Activated T-helper 1 cell treated with anti-CD3 and anti-CD28 coated beads, Interleukin-12 subunit alpha, Interleukin-12 subunit beta, Interleukin-2, Interleukin-4 antibody, amounts not matched to agents 30 ng/mL and 10 ng/mL and 1 ng/mL, durations not matched to agents 14 hours and 24 hours and 36 hours (primary cell): ENCODE measurements at regions of chr1 and their contacts with region 1.

Region 1: DNA sequence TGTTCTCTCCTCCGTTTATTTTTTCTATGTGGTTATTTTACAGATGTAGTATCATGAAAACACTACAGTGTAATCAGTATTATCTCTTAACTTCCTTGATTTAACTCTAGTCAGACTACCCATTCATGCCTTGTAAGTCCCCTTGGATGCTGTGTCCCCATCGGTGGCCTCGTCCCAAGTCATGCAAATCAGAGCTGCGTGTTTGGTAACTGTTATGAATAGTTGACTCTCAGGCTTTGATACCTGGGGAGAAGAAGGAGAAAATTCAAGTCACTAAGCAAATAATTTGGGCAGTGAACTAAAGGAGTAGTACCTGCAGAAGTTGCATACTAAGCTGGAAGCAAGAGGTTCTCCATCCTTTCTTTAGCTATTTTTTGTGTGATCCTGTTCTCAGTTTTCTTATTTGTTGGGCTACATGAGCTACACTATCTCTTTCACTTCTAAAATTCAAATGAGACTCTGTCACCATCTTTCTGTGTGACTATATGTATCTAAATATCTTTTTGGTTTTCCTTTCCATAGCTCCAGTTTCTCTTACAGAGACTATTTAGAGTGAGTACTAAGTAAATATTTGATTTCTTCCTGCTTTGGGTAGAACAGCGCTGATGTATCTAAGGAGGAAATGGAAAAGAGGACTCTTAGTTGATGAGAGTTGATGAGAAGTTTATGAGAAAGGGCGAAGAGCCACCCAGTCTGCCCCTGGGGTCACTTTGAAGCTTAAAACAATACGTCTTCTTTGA is 50.9 kb downstream of the VANGL2 start:
- DNase-seq: no peak
- H3K4me3 Mint-ChIP-seq: peak overlapping the region; percentile 49
- H3K27ac Mint-ChIP-seq: peak overlapping the region; percentile 93
- H3K4me1 Mint-ChIP-seq: peaks cover 71% of the 10 kb centered on the region
- H3K27me3 Mint-ChIP-seq: no peaks in the 10 kb centered on the region

Region 2: DNA sequence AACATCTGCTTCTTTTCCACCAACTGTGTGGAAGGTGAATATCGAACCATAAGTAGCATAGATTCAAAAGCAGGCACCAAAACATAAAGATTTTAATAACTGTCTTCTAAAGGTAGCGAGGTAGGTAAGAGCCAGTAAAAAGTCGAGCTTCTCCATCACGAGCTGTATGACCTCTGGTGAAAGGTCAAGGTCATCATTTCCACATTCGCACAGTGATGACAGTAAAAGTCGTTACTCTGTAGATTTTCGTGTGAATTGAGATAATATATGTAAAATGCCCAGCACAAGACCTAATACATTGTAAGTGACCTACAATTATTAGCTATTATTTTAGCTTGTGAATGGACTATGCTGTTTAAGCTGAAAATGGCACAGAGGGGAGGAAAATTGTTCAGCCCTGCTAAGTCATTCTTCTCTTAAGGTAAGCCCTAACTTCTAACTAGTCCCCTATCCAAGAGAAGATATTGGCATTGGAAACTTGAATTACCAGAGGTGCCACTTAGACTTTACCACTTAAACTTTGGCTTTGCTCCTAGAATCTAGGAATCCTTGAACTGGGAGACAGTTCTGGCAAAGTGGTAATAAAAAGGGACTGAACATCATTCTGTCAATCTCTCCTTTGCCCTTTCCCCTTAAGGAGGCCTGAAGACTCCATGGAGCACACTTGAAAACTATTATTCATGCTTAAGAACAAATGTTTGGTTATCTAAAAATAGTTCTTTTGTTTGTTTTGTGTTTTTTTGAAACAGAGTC is 291.6 kb before region 1 on chr1:
- intact Hi-C with region 1: no loop called
- DNase-seq: no peak
- H3K4me3 Mint-ChIP-seq: no peak overlapping the region
- H3K27ac Mint-ChIP-seq: no peak overlapping the region
- H3K4me1 Mint-ChIP-seq: no peaks in the 10 kb centered on the region
- H3K27me3 Mint-ChIP-seq: peaks cover 22% of the 10 kb centered on the region

Region 3: GRCh38 chr1:160394673-160395072 is 56.6 kb before region 1 on chr1:
- intact Hi-C with region 1: no loop called
- DNase-seq: no peak
- H3K4me3 Mint-ChIP-seq: no peak overlapping the region
- H3K27ac Mint-ChIP-seq: no peak overlapping the region
- H3K4me1 Mint-ChIP-seq: peaks cover 5% of the 10 kb centered on the region
- H3K27me3 Mint-ChIP-seq: peaks cover 30% of the 10 kb centered on the region

Region 4: DNA sequence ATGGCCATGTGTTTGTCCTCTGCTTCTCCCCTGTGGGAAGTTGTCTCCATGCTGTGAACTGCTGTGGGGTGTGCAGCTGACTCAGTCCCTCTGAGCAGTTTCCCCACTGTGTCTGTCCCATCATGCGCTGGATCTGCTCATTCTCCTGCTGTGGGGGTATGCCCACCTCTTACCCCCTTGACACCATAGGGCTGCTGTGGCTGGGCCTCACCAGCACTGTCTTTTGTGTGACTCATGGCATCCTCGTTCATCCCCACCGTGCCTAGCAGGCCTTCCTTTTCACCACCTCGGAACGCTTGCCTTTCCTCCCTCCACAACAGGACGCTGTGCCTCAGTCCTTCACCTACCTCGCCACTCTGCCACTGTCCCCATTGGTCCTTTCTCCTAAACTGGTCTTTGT is 23.7 kb before region 1 on chr1:
- intact Hi-C with region 1: no loop called
- DNase-seq: no peak
- H3K4me3 Mint-ChIP-seq: no peak overlapping the region
- H3K27ac Mint-ChIP-seq: peak overlapping the region; percentile 59
- H3K4me1 Mint-ChIP-seq: peaks cover 51% of the 10 kb centered on the region
- H3K27me3 Mint-ChIP-seq: no peaks in the 10 kb centered on the region

Region 5: DNA sequence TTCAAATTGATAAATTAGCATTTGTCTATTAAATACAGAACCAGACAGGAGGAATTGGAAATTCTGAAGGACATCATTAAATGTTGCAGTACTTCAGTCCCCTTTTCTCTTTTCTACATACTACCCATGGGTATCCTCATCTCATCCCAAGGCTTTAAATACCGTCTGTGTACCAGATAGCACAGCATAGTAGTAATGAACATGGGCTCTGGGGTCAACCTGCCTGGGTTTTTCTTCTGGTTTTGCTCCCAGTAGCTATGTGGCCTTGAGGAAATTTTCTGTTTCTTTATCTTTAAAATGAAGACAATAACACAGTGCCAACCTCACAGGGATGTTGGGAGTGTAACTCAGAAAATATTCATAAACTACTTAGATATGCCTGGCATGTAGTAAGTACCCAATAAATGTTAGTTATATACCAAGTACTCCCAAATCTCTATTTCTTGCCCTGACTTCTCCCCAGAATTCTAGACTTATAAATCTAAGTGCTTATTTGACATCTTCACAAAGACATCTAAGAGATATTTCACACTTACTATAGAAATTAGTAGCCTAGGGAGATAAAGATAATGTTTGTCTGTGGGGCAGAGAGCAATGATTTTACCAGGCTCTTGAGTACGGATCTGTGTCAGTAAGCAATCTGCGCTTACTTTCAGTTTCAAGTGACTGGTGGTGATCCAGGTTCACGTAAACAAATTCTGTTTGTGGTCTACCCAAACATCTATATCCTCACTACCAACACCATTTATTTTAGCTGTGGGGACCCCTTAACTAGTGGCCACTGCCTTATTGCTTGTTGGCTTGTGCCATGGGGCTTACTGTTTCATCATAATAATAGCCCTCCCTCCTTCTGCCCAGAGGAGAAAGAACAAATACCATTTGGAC is 13.6 kb before region 1 on chr1:
- intact Hi-C with region 1: loop called (anchors 1 kb)
- DNase-seq: peak; percentile 39
- H3K4me3 Mint-ChIP-seq: peak overlapping the region; percentile 71
- H3K27ac Mint-ChIP-seq: peak overlapping the region; percentile 94
- H3K4me1 Mint-ChIP-seq: peaks cover 54% of the 10 kb centered on the region
- H3K27me3 Mint-ChIP-seq: no peaks in the 10 kb centered on the region

Region 6: DNA sequence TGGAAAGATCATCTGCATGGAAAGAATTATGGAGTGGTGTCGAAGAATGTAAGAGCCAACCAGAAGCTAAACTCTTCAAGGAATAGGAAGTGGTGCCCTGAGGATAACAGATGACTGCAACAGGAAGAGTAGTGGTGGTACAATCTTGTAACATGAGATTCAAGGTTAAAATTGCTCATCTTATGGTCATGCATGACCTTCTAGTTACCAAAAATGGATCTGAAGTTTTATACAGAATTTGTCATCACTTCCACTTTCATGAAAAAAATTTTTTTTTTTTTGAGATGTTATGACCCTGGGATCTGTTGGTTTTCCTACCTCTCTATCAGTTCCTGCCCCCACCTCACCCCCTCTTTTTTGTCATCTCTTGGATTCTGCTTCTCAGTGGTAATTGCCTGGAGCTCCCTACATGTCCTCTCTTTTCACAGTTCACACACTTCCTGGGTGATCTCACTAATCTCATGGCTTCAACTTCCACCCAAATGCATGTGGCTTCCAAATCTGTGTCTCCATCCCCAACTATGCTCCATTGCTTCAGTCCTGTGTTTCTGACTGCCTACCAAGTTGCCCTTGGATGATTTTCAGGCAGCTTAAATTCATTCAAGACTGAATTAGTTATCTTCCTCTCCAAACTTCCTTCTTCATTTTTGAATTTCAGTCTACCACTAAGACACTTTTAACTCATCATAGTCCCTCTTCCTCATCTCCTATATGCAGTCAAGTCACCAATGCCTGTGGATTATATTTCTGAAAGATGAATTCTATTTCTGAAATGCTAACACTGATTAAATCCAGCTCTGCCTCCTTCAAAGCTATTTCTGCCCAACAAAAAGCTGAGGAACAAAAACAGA is 23.3 kb after region 1 on chr1:
- intact Hi-C with region 1: loop called (anchors 1 kb)
- DNase-seq: no peak
- H3K4me3 Mint-ChIP-seq: no peak overlapping the region
- H3K27ac Mint-ChIP-seq: no peak overlapping the region
- H3K4me1 Mint-ChIP-seq: no peaks in the 10 kb centered on the region
- H3K27me3 Mint-ChIP-seq: no peaks in the 10 kb centered on the region

Region 7: GRCh38 chr1:160748181-160748877 is 297.0 kb after region 1 on chr1:
- intact Hi-C with region 1: loop called (anchors 10 kb)
- DNase-seq: no peak
- H3K4me3 Mint-ChIP-seq: peak overlapping the region; percentile 3
- H3K27ac Mint-ChIP-seq: peak overlapping the region; percentile 61
- H3K4me1 Mint-ChIP-seq: peaks cover 92% of the 10 kb centered on the region
- H3K27me3 Mint-ChIP-seq: no peaks in the 10 kb centered on the region

Region 8: GRCh38 chr1:160997323-160998038 is 546.2 kb after region 1 on chr1:
- intact Hi-C with region 1: no loop called
- DNase-seq: peak; percentile 41
- H3K4me3 Mint-ChIP-seq: no peak overlapping the region
- H3K27ac Mint-ChIP-seq: peak overlapping the region; percentile 47
- H3K4me1 Mint-ChIP-seq: peaks cover 33% of the 10 kb centered on the region
- H3K27me3 Mint-ChIP-seq: no peaks in the 10 kb centered on the region